Naive thymus-derived CD4-positive, alpha-beta T cell (primary cell): ENCODE measurements at regions of chr9 and their contacts with region 1.

Region 1: DNA sequence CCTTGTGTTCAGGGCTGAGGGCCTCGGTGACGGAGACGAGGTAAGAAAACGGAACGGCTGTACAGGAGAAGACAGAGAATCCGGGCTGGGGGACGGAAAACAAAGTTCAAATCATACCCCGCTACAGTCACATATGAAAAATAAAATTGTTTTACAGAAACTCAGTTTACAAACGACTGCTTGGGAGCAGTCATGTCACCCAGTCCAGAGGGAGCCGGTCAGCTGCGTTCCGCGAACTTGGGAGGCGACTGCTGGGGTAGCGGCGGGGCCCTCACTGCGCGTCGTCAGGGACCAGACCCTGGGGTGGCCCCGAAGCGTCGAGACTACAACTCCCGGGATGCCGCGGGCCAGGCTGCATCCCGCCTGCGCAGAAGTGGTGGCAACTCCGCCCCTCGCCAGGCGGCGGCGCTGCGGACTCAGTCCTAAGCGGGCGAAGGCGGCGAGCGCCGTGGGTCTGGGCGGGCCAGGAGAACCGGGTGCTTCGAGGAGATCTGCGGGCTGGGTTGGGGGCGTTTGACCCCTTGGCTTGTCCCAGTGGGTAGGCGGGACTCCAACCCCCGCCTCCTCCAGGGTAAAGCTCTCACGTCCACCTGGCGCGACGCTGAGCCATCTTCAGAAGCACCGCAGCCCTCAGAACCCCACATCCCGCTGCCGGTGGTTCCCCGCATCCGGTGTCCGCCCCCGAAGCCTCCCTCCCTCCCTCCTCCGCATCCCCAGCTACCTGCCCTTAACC is 4.0 kb downstream of the SIT1 start:
- DNase-seq: peak; percentile 87 to 96 (median 93)
- ATAC-seq: peak; percentile 95
- H3K4me3 ChIP-seq: peak overlapping the region; percentile 90
- H3K4me3 Mint-ChIP-seq: peak overlapping the region; percentile 90 to 100 (median 96)
- H3K27ac ChIP-seq: peak overlapping the region; percentile 83
- H3K27ac Mint-ChIP-seq: peak overlapping the region; percentile 86 to 99 (median 96)
- H3K4me1 ChIP-seq: peaks cover 44 to 51% of the 10 kb centered on the region in 2 donors
- H3K4me1 Mint-ChIP-seq: peaks cover 40 to 70% (median 46%) of the 10 kb centered on the region in 7 donors
- H3K27me3 ChIP-seq: no peaks in the 10 kb centered on the region
- H3K27me3 Mint-ChIP-seq: no peaks in the 10 kb centered on the region

Region 2: DNA sequence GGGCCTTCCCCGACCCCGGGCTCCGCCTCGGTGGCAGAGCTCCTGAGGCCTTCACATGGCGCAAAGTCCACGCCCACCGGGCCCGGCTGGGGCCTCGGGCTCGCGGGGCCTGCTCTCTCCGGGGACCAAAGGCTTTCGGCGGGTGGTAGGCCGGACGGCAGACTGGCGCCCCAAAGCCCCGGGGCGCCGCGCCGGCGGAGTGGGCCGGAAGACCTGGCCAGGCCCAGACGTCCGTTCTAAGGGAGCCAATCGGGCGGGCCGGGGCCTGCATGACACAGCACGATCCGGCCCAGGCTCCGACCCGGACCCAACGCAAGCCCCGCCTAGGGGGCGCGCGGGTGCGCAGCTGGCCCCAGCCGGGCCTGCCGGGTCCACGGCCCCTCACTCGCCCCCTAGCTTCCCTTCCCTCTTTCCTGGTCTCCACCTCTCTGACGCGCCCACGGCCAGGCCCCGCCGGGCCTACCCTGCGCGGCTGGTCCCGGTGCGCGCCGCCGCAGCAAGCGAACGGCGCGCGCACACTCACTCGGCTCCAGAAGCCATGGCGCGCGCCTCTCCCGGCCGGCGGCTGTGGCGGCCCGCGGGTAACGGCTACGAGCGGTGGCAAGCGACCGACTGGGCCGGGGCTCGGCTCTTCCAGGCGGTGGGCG is 574.8 kb before region 1 on chr9:
- CTCF ChIA-PET with region 1: no interaction called
- POLR2A ChIA-PET with region 1: no interaction called
- intact Hi-C with region 1: loop called in 1 of 2 experiments (anchors 1 kb)
- DNase-seq: peak in 8 of 9 donors; percentile 67 to 83 (median 71)
- ATAC-seq: peak; percentile 70
- H3K4me3 ChIP-seq: peak overlapping the region; percentile 53
- H3K4me3 Mint-ChIP-seq: peak overlapping the region; percentile 74 to 95 (median 88)
- H3K27ac ChIP-seq: peak overlapping the region; percentile 93
- H3K27ac Mint-ChIP-seq: peak overlapping the region; percentile 81 to 96 (median 91)
- H3K4me1 ChIP-seq: peaks cover 22 to 43% of the 10 kb centered on the region in 2 donors
- H3K4me1 Mint-ChIP-seq: peaks cover 34 to 66% (median 53%) of the 10 kb centered on the region in 7 donors
- H3K27me3 ChIP-seq: no peaks in the 10 kb centered on the region
- H3K27me3 Mint-ChIP-seq: peaks cover 0 to 3% (median 0%) of the 10 kb centered on the region in 5 donors

Region 3: GRCh38 chr9:35616681-35617459 is 29.8 kb before region 1 on chr9:
- CTCF ChIA-PET with region 1: interaction called, 118 read pairs
- POLR2A ChIA-PET with region 1: interaction called, 94 read pairs
- intact Hi-C with region 1: loop called (anchors 1 kb)
- DNase-seq: peak; percentile 46 to 71 (median 64)
- ATAC-seq: peak; percentile 80
- H3K4me3 ChIP-seq: peak overlapping the region; percentile 84
- H3K4me3 Mint-ChIP-seq: peak overlapping the region; percentile 82 to 89 (median 86)
- H3K27ac ChIP-seq: peak overlapping the region; percentile 71
- H3K27ac Mint-ChIP-seq: peak overlapping the region; percentile 84 to 93 (median 91)
- H3K4me1 ChIP-seq: peaks cover 27 to 36% of the 10 kb centered on the region in 2 donors
- H3K4me1 Mint-ChIP-seq: peaks cover 33 to 44% (median 38%) of the 10 kb centered on the region in 7 donors
- H3K27me3 ChIP-seq: no peaks in the 10 kb centered on the region
- H3K27me3 Mint-ChIP-seq: no peaks in the 10 kb centered on the region

Region 4: GRCh38 chr9:35657546-35658136 is 10.9 kb after region 1 on chr9 and contains the start of gene RMRP:
- CTCF ChIA-PET with region 1: interaction called, 103 read pairs
- POLR2A ChIA-PET with region 1: interaction called, 264 read pairs
- intact Hi-C with region 1: loop called (anchors 1 kb)
- DNase-seq: peak; percentile 67 to 93 (median 91)
- ATAC-seq: peak; percentile 87
- H3K4me3 ChIP-seq: peak within 1 kb of the TSS; percentile 94
- H3K4me3 Mint-ChIP-seq: peak within 1 kb of the TSS; percentile 78 to 95 (median 90)
- H3K27ac ChIP-seq: peak within 1 kb of the TSS; percentile 99
- H3K27ac Mint-ChIP-seq: peak within 1 kb of the TSS; percentile 97 to 100 (median 100)
- H3K4me1 ChIP-seq: peaks cover 35 to 48% of the 10 kb centered on the region in 2 donors
- H3K4me1 Mint-ChIP-seq: peaks cover 42 to 78% (median 69%) of the 10 kb centered on the region in 7 donors
- H3K27me3 ChIP-seq: no peaks in the 10 kb centered on the region
- H3K27me3 Mint-ChIP-seq: peaks cover 0 to 6% (median 0%) of the 10 kb centered on the region in 5 donors
- total RNA-seq, gene RMRP: 5,750 to 11,273 (median 9,225) TPM

Region 5: GRCh38 chr9:35690431-35691333 is 44.0 kb after region 1 on chr9:
- CTCF ChIA-PET with region 1: interaction called, 39 read pairs
- POLR2A ChIA-PET with region 1: interaction called, 36 read pairs
- intact Hi-C with region 1: loop called (anchors 1 kb)
- DNase-seq: peak in 7 of 9 donors; percentile 21 to 52 (median 31)
- ATAC-seq: peak; percentile 50
- H3K4me3 ChIP-seq: peak overlapping the region; percentile 65
- H3K4me3 Mint-ChIP-seq: peak overlapping the region; percentile 80 to 94 (median 88)
- H3K27ac ChIP-seq: peak overlapping the region; percentile 70
- H3K27ac Mint-ChIP-seq: peak overlapping the region; percentile 12 to 95 (median 74)
- H3K4me1 ChIP-seq: peaks cover 0 to 5% of the 10 kb centered on the region in 2 donors
- H3K4me1 Mint-ChIP-seq: peaks cover 16 to 31% (median 25%) of the 10 kb centered on the region in 7 donors
- H3K27me3 ChIP-seq: no peaks in the 10 kb centered on the region
- H3K27me3 Mint-ChIP-seq: no peaks in the 10 kb centered on the region

Region 6: GRCh38 chr9:35748858-35749514 is 102.3 kb after region 1 on chr9 and contains the starts of genes GBA2 and RGP1:
- CTCF ChIA-PET with region 1: interaction called, 3 read pairs
- POLR2A ChIA-PET with region 1: interaction called, 34 read pairs
- intact Hi-C with region 1: loop called (anchors 1 kb)
- DNase-seq: peak; percentile 36 to 82 (median 51)
- ATAC-seq: peak; percentile 84
- H3K4me3 ChIP-seq: peak within 1 kb of the TSS; percentile 84
- H3K4me3 Mint-ChIP-seq: peak within 1 kb of the TSS; percentile 89 to 98 (median 96)
- H3K27ac ChIP-seq: peak within 1 kb of the TSS; percentile 87
- H3K27ac Mint-ChIP-seq: peak within 1 kb of the TSS; percentile 89 to 97 (median 96)
- H3K4me1 ChIP-seq: peaks cover 32 to 33% of the 10 kb centered on the region in 2 donors
- H3K4me1 Mint-ChIP-seq: peaks cover 36 to 66% (median 49%) of the 10 kb centered on the region in 7 donors
- H3K27me3 ChIP-seq: no peaks in the 10 kb centered on the region
- H3K27me3 Mint-ChIP-seq: no peaks in the 10 kb centered on the region
- total RNA-seq, gene GBA2: 22.7 to 55.4 (median 49.9) TPM
- total RNA-seq, gene RGP1: 21.2 to 28.8 (median 23.3) TPM

Region 7: GRCh38 chr9:35829084-35829763 is 182.5 kb after region 1 on chr9 and contains the start of gene TMEM8B:
- CTCF ChIA-PET with region 1: no interaction called
- POLR2A ChIA-PET with region 1: no interaction called
- intact Hi-C with region 1: loop called in 1 of 2 experiments (anchors 1 kb)
- DNase-seq: peak; percentile 80 to 95 (median 88)
- ATAC-seq: peak; percentile 95
- H3K4me3 ChIP-seq: peak within 1 kb of the TSS; percentile 88
- H3K4me3 Mint-ChIP-seq: peak within 1 kb of the TSS; percentile 84 to 100 (median 94)
- H3K27ac ChIP-seq: peak within 1 kb of the TSS; percentile 94
- H3K27ac Mint-ChIP-seq: peak within 1 kb of the TSS; percentile 91 to 99 (median 94)
- H3K4me1 ChIP-seq: peaks cover 4 to 14% of the 10 kb centered on the region in 2 donors
- H3K4me1 Mint-ChIP-seq: peaks cover 25 to 48% (median 43%) of the 10 kb centered on the region in 7 donors
- H3K27me3 ChIP-seq: no peaks in the 10 kb centered on the region
- H3K27me3 Mint-ChIP-seq: peaks cover 0 to 5% (median 0%) of the 10 kb centered on the region in 5 donors
- total RNA-seq, gene TMEM8B: 3.9 to 11.6 (median 10.6) TPM

Region 8: GRCh38 chr9:36572515-36573418 is 926.1 kb after region 1 on chr9 and contains the start of gene MELK:
- CTCF ChIA-PET with region 1: no interaction called
- POLR2A ChIA-PET with region 1: no interaction called
- intact Hi-C with region 1: no loop called
- DNase-seq: peak; percentile 69 to 94 (median 82)
- ATAC-seq: peak; percentile 97
- H3K4me3 ChIP-seq: peak within 1 kb of the TSS; percentile 83
- H3K4me3 Mint-ChIP-seq: peak within 1 kb of the TSS; percentile 88 to 95 (median 90)
- H3K27ac ChIP-seq: peak within 1 kb of the TSS; percentile 76
- H3K27ac Mint-ChIP-seq: peak within 1 kb of the TSS; percentile 62 to 90 (median 83)
- H3K4me1 ChIP-seq: peaks cover 0 to 5% of the 10 kb centered on the region in 2 donors
- H3K4me1 Mint-ChIP-seq: peaks cover 7 to 38% (median 13%) of the 10 kb centered on the region in 7 donors
- H3K27me3 ChIP-seq: no peaks in the 10 kb centered on the region
- H3K27me3 Mint-ChIP-seq: peaks cover 0 to 5% (median 0%) of the 10 kb centered on the region in 5 donors
- total RNA-seq, gene MELK: 0.22 to 40.2 (median 0.88) TPM in 3 of 5 experiments, not detected in the others